ENCODE measurements at regions of chr1 and their contacts with region 1.

Region 1: DNA sequence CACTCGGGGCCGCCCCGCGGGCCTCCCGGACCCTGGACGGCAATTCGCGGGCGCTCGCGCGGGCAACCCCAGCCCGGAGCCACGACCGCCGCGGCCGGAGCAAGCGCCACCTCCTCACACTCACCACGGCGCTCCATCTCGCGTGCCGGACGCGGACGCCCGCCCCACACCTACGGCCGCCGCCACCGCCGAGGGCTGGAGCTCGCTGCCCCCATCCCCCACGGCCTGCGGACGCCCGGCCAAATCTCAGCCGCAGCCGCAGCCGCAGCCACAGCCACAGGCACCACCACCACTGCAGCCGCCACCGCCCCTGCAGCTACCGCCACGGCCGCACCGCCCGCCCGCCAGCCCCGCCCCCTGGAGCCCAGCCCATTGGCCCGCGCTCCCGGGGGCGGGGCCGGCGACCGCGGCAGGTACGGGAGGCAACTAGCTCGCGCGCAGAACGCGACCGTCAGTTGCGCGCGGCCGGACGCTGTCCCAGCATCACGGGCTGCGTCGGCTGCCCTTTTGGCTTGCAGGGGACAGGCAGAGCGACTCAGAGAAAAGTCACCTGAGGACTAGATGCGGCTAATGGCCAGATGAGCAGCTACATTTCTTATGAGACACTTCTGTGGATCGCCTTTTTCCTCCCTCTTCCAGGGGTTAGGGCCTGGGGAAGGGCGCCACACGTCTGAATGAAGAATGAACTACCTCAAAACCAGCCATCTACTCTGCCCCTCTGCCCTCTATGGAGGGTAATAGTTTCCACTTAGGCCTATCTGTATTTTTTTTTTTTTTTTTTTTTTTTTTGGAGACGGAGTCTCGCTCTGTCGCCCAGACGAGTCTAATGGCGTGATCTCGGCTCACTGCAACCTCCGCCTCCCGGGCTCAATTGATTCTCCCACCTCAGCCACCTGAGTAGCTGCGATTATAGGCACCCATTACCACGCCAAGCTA is at the start of gene ARHGAP29:
- DNase-seq: peak; percentile 74
- ATAC-seq: peak; percentile 95
- H3K4me3 ChIP-seq: peak within 1 kb of the TSS; percentile 73 to 97 (median 93)
- H3K27ac ChIP-seq: peak within 1 kb of the TSS; percentile 66
- H3K4me1 ChIP-seq: peaks cover 45% of the 10 kb centered on the region
- H3K27me3 ChIP-seq: no peaks in the 10 kb centered on the region; a peak in 1 of 5 replicates
- CTCF ChIP-seq: peak; percentile 32; the same call in 1 of the 2 replicates
- EP300 ChIP-seq: no peak
- POLR2A ChIP-seq: peak; percentile 85 to 99
- RAD21 ChIP-seq: no peak
- total RNA-seq, gene ARHGAP29: 12.8 and 18.8 TPM in 2 replicates

Region 2: GRCh38 chr1:94045465-94046056 is 192.0 kb before region 1 on chr1:
- CTCF ChIA-PET with region 1: interaction called, 17 read pairs
- POLR2A ChIA-PET with region 1: interaction called, 11 read pairs
- in situ Hi-C with region 1: no loop called
- intact Hi-C with region 1: loop called (anchors 1 kb)
- DNase-seq: peak; percentile 83
- ATAC-seq: peak; percentile 78
- H3K4me3 ChIP-seq: peak overlapping the region; percentile 14 to 71 (median 17); a peak in 5 of 6 replicates
- H3K27ac ChIP-seq: no peak overlapping the region
- H3K4me1 ChIP-seq: peaks cover 52% of the 10 kb centered on the region
- H3K27me3 ChIP-seq: no peaks in the 10 kb centered on the region
- CTCF ChIP-seq: peak; percentile 89
- EP300 ChIP-seq: no peak
- POLR2A ChIP-seq: no peak
- RAD21 ChIP-seq: peak; percentile 87

Region 3: DNA sequence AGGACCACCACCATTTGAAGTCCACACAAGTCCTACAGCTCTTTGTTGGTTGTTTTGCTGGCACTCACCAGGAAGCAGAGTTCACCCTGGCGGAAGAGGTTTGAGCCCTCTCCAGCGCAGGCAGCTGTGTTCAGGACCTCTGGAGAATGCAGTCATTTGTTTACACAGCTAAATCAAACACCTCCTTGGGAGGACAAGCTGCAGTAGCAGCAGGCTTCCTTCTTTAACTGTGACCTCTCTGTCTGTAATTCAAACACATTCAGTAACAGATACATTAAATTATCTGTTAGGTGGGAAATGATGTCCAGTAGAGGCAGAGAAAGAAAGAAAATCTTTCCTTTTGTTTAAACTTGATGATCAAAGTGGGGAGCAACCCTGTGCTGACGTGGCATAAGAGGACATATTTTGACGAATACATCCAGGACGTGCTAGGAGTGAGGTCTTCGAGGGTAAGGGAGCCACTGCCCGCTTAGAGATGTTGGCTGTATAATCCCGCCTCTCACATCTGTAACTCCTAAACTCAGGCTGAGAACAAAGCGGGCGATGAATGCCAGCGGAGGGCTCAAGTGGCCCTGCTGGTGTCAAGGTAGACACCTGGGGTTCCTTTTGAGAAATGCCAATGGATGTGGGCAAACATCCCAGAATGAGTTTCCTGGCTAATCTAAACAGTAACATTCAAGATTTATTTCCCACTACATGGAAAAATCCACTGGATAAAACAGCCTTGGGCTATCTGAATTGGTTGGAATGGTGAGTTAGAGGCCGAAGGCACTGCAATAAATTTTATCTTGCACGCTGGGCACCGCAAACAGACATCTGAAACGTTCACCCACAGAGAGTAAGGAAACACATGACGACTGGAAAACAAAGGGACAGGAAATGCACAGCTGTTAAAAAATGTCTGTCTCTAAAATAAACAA is 168.3 kb before region 1 on chr1:
- CTCF ChIA-PET with region 1: interaction called, 4 read pairs
- POLR2A ChIA-PET with region 1: interaction called, 23 read pairs
- in situ Hi-C with region 1: loop called (anchors 5 kb)
- intact Hi-C with region 1: no loop called
- DNase-seq: peak; percentile 87
- ATAC-seq: peak; percentile 93
- H3K4me3 ChIP-seq: peak overlapping the region in 2 of 3 experiments; percentile 19 to 50; a peak in 4 of 6 replicates
- H3K27ac ChIP-seq: peak overlapping the region; percentile 77
- H3K4me1 ChIP-seq: peaks cover 37% of the 10 kb centered on the region
- H3K27me3 ChIP-seq: no peaks in the 10 kb centered on the region
- CTCF ChIP-seq: no peak
- EP300 ChIP-seq: peak in 1 of 2 experiments; percentile 63; a peak in 2 of 4 replicates
- POLR2A ChIP-seq: no peak; a peak in 1 of 4 replicates
- RAD21 ChIP-seq: no peak

Region 4: GRCh38 chr1:94218332-94218731 is 19.2 kb before region 1 on chr1:
- CTCF ChIA-PET with region 1: no interaction called
- POLR2A ChIA-PET with region 1: no interaction called
- in situ Hi-C with region 1: no loop called
- intact Hi-C with region 1: no loop called
- DNase-seq: no peak
- ATAC-seq: no peak
- H3K4me3 ChIP-seq: no peak overlapping the region
- H3K27ac ChIP-seq: no peak overlapping the region
- H3K4me1 ChIP-seq: peaks cover 10% of the 10 kb centered on the region; the same call in 1 of the 2 replicates
- H3K27me3 ChIP-seq: no peaks in the 10 kb centered on the region
- CTCF ChIP-seq: no peak
- EP300 ChIP-seq: no peak
- POLR2A ChIP-seq: no peak
- RAD21 ChIP-seq: no peak

Region 5: DNA sequence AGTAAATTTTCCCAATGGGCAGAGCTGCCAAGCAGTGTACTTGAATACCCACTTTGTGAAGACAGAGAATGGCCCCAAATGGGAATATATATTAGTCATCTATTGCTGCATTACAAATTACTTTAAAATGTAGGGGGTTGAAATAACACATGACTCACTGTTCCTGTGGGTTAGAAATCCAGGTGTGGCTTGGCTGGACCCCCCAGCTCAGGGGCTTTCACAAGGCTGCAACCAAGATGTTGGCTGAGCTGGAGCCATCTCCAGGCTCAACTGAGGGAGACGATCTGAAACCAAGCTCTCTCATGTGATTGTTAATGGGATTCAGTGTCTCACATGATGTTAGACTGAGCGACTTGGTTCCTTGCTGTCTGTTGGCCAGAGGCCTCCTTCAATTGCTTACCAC is 33.2 kb after region 1 on chr1:
- CTCF ChIA-PET with region 1: no interaction called
- POLR2A ChIA-PET with region 1: no interaction called
- in situ Hi-C with region 1: no loop called
- intact Hi-C with region 1: no loop called
- DNase-seq: no peak
- ATAC-seq: no peak
- H3K4me3 ChIP-seq: no peak overlapping the region
- H3K27ac ChIP-seq: no peak overlapping the region
- H3K4me1 ChIP-seq: peaks cover 15% of the 10 kb centered on the region
- H3K27me3 ChIP-seq: 0 out of 5 replicates have a peak, but pooled peaks cover 0 to 3% of the 10 kb centered on the region in 2 experiments
- CTCF ChIP-seq: no peak
- EP300 ChIP-seq: no peak
- POLR2A ChIP-seq: no peak
- RAD21 ChIP-seq: no peak

Region 6: DNA sequence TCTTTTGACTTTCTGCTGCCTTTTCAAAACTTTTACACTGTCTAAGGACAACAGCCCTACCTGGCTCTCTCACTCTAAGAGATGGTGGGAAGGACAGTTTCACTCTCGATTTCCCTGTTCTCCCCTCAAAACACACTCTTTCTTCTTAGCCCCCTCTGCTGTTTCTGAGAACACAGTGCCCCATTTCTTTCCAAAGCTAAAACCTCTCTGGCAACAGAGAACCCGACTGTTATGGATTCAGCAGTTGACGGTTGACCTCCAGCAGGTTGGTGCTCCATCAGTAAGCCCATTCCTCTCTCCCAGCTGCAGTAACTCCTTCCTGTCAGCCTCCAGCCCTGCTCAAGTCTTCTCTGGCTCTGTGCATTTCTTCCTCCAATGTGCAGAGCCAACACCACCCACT is 92.4 kb after region 1 on chr1:
- CTCF ChIA-PET with region 1: interaction called, 12 read pairs
- POLR2A ChIA-PET with region 1: interaction called, 12 read pairs
- in situ Hi-C with region 1: no loop called
- intact Hi-C with region 1: loop called (anchors 2 kb)
- DNase-seq: peak; percentile 67
- ATAC-seq: peak; percentile 90
- H3K4me3 ChIP-seq: peak overlapping the region in 2 of 3 experiments; percentile 22 to 26; a peak in 2 of 6 replicates
- H3K27ac ChIP-seq: no peak overlapping the region
- H3K4me1 ChIP-seq: peaks cover 59% of the 10 kb centered on the region
- H3K27me3 ChIP-seq: no peaks in the 10 kb centered on the region
- CTCF ChIP-seq: peak; percentile 82
- EP300 ChIP-seq: no peak
- POLR2A ChIP-seq: no peak
- RAD21 ChIP-seq: peak; percentile 61; the same call in 1 of the 2 replicates

Region 7: GRCh38 chr1:94463765-94464330 is 226.3 kb after region 1 on chr1:
- CTCF ChIA-PET with region 1: no interaction called
- POLR2A ChIA-PET with region 1: no interaction called
- in situ Hi-C with region 1: no loop called
- intact Hi-C with region 1: loop called (anchors 5 kb)
- DNase-seq: peak; percentile 71
- ATAC-seq: peak; percentile 91
- H3K4me3 ChIP-seq: no peak overlapping the region
- H3K27ac ChIP-seq: peak overlapping the region; percentile 3
- H3K4me1 ChIP-seq: peaks cover 35% of the 10 kb centered on the region
- H3K27me3 ChIP-seq: no peaks in the 10 kb centered on the region
- CTCF ChIP-seq: peak; percentile 85
- EP300 ChIP-seq: no peak
- POLR2A ChIP-seq: no peak
- RAD21 ChIP-seq: peak; percentile 79

Region 8: DNA sequence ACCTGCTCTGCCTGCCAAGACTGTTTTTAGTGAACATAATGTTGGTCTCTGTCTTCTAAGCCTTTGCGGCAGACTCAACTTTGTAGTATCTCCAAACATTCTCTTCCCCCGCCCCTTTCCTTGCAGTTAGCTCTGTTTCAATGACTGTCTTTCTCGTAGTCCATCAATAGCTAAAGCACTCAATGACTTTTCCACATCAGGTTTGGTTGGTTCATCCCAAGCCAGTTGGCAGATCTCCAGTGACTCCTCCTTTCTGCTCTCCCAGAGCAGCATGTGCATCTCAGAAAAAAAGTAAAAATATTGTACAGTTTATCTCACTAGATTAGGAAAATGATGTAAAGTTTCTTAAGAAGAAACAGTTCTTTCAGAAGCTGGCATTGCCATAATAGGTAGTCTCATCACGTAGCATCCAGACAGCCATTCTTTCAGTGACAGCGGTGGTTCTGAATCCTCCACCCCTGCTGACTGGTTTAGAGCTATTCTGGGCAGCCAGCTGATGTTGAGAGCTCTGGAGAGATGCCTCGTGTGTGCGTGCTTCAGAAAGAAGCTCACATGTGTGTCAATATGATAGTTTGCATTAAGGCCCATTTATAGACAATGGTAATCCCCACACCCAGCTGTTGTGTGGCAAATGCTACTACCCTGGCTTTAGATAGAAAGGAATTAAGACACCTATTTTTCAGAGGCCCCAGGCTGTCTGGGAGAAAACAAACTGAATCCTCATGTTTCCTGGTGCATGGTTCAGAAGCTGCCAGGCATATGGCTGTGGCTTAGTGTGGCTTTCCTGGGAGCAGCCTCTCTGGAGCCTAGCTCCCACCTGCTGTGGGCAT is 636.2 kb after region 1 on chr1:
- CTCF ChIA-PET with region 1: no interaction called
- POLR2A ChIA-PET with region 1: no interaction called
- in situ Hi-C with region 1: no loop called
- intact Hi-C with region 1: no loop called
- DNase-seq: no peak
- ATAC-seq: no peak
- H3K4me3 ChIP-seq: no peak overlapping the region
- H3K27ac ChIP-seq: no peak overlapping the region
- H3K4me1 ChIP-seq: no peaks in the 10 kb centered on the region
- H3K27me3 ChIP-seq: no peaks in the 10 kb centered on the region
- CTCF ChIP-seq: no peak
- EP300 ChIP-seq: no peak
- POLR2A ChIP-seq: no peak
- RAD21 ChIP-seq: no peak